ENCODE measurements at regions of chr16 and their contacts with region 1.

Region 1: DNA sequence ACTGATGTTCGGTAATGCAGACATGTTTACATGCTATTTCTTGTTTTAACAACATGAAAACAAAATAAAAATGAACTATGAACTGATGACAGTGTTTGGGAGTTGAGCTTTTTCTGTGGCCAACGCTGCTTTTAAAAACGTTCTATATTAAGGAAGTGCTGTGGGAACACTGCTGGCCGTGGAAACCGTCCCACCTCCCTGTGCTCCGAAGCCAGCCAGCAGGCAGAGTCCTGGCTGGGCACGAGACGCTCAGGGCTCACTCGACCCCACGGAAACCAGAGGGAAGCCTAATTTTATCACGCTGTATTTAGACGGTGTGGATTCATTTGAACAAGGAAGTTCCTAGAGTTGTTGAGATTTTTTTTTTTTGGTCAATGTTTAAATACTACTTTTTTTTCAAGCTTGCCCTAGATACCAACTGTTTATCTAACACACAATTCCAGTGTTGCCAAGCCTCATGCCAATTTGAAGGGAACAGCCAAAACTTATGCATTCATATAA is 25.8 kb downstream of the ADCY9 start:
- DNase-seq: peak; percentile 44 to 65
- ATAC-seq: peak; percentile 61 to 88 (median 76)
- H3K4me3 ChIP-seq: peak overlapping the region in 3 of 10 donors; percentile 3 to 13 (median 10)
- H3K27ac ChIP-seq: peak overlapping the region; percentile 37 to 83 (median 68)
- H3K4me1 ChIP-seq: peaks cover 8 to 75% (median 36%) of the 10 kb centered on the region in 9 donors
- H3K27me3 ChIP-seq: no peaks in the 10 kb centered on the region
- CTCF ChIP-seq: no peak

Region 2: DNA sequence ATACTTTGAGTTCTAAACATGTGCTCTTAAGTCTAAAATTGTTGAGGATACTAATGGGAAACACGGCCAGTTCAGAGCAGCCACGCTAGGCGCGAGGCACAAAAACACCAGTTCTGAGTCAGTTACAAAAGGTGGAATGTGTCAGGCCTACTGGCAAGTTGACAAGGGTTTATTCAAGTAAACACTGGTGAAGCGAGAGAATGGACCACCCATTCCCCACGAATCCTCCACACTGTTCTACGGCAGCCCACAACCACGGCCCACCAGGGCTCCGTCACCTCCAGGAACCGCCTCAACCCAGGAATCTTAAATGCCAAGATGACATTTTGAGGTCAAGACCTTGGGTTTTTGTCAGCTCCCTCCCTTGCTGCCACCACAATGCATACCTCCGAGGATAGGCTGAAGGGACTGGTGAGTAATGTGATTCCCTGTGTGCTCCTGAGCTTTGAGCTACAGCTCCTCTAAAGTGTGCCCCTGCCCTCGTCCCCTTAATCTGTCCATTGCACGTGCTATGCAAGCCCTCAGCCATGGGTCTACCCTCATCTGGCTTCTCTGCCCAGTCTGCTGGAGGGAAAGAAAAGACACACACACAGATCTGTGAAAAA is 344.5 kb before region 1 on chr16:
- intact Hi-C with region 1: no loop called
- DNase-seq: no peak
- ATAC-seq: peak in 1 of 8 donors; percentile 43
- H3K4me3 ChIP-seq: no peak overlapping the region
- H3K27ac ChIP-seq: no peak overlapping the region
- H3K4me1 ChIP-seq: no peaks in the 10 kb centered on the region
- H3K27me3 ChIP-seq: no peaks in the 10 kb centered on the region
- CTCF ChIP-seq: no peak

Region 3: GRCh38 chr16:4053301-4053845 is 37.0 kb before region 1 on chr16:
- intact Hi-C with region 1: loop called in 4 of 10 experiments (anchors 5 kb)
- DNase-seq: peak; percentile 70 to 78
- ATAC-seq: peak; percentile 78 to 95 (median 90)
- H3K4me3 ChIP-seq: peak overlapping the region in 8 of 10 donors; percentile 2 to 39 (median 26)
- H3K27ac ChIP-seq: peak overlapping the region; percentile 42 to 86 (median 77)
- H3K4me1 ChIP-seq: peaks cover 3 to 38% (median 27%) of the 10 kb centered on the region in 9 donors
- H3K27me3 ChIP-seq: no peaks in the 10 kb centered on the region
- CTCF ChIP-seq: no peak